ENCODE measurements at regions of chr16 and their contacts with region 1.

Region 1: DNA sequence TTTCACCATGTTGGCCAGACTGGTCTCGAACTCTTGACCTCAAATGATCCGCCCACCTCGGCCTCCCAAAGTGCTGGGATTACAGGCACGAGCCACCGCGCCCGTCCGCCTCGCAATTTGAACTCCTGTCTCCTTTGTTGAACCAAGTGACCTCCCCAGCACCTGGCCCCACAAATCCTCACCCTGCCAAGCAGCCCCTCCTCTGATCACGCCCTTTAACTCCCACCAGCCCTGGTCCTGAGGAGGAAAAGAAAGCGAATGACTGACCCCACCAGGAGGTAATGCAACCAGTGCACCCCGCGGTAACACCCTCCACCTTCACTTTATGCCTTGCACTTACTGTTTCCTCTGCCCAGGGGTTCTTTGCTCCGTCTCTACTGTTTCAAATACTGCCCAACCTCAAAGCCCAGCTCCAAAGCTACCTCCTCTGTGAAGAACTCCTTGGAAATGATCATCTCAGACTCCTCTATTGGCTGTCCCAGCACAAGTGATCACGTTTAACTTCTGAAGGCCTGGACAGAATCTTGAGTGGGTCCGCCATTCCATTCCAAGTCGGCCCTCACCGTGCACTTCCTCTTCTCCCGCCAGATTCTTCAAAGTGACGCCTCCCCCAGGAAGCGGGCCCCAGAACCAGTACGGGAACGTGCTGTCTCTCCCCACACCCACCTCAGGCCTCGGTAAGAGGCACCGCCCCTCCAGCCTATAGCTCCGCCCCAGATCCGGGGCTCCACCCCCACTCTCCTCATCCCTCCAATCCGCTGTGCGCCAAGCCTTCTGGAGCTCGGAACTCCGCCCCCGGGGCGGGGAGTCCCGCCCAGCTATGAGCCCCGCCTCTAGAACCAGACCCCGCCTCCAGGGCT is 4.4 kb downstream of the CD19 start:
- DNase-seq: peak; percentile 88
- ATAC-seq: peak; percentile 99
- H3K4me3 Mint-ChIP-seq: peak overlapping the region; percentile 60
- H3K27ac Mint-ChIP-seq: peak overlapping the region; percentile 23
- H3K4me1 Mint-ChIP-seq: peaks cover 26% of the 10 kb centered on the region
- H3K27me3 Mint-ChIP-seq: no peaks in the 10 kb centered on the region

Region 2: DNA sequence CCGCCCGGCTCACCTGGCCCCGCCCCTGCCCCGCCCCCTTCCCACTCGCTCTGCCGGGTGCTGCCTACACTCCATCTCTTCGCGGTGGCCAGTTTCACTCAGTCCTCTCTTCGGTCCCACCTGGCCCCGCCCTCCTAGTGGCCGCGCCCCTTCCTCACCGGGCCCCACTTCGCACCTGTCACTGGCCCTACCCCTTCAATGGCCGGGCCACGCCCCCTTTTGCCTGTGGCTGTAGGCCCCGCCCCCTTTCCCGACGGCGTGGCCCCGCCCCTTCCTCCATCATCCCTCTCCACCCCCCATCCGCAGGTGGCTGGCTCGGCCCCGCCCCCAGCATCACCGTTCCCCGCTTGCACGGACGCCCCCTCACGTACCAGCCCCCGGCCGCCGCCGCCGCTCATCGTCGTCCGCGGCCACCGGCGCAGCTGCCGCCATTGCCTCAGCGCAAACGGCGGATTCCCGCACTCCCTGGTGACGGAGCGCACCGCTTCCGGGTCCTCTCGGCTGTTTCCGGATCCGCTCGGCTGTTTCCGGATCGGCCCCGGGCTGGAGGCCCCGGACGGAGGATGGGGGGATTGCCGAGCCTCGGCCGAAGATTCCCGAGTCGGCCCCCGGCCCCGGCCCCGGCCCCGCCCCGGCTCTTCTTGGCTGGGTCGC is 11.3 kb before region 1 on chr16 and contains the start of gene RABEP2:
- CTCF ChIA-PET with region 1: interaction called, 13 read pairs
- POLR2A ChIA-PET with region 1: interaction called, 3 read pairs
- DNase-seq: peak; percentile 97
- ATAC-seq: peak; percentile 91
- H3K4me3 Mint-ChIP-seq: peak within 1 kb of the TSS; percentile 89
- H3K27ac Mint-ChIP-seq: peak within 1 kb of the TSS; percentile 98
- H3K4me1 Mint-ChIP-seq: peaks cover 22% of the 10 kb centered on the region
- H3K27me3 Mint-ChIP-seq: no peaks in the 10 kb centered on the region
- total RNA-seq, gene RABEP2: 22.5 to 23.2 TPM

Measured in activated CD8-positive, alpha-beta T cell treated with anti-CD3 and anti-CD28 coated beads, Interleukin-2, amount 10 ng/mL, durations not matched to agents 7 days and 5 days (primary cell).